B cell (primary cell): ENCODE measurements at regions of chr13 and their contacts with region 1.

Region 1: GRCh38 chr13:30739761-30740642 is 4.7 kb downstream of the ALOX5AP start:
- DNase-seq: peak; percentile 55
- ATAC-seq: peak; percentile 3
- H3K4me3 ChIP-seq: peak overlapping the region in 2 of 5 experiments; percentile 0 to 52
- H3K4me3 Mint-ChIP-seq: peak overlapping the region; percentile 84
- H3K27ac ChIP-seq: peak overlapping the region in 1 of 2 donors; percentile 45
- H3K27ac Mint-ChIP-seq: peak overlapping the region; percentile 78
- H3K4me1 ChIP-seq: peaks cover 69 to 82% of the 10 kb centered on the region in 2 donors
- H3K4me1 Mint-ChIP-seq: peaks cover 80% of the 10 kb centered on the region
- H3K27me3 ChIP-seq: no peaks in the 10 kb centered on the region
- H3K27me3 Mint-ChIP-seq: no peaks in the 10 kb centered on the region
- CTCF ChIP-seq: no peak

Region 2: DNA sequence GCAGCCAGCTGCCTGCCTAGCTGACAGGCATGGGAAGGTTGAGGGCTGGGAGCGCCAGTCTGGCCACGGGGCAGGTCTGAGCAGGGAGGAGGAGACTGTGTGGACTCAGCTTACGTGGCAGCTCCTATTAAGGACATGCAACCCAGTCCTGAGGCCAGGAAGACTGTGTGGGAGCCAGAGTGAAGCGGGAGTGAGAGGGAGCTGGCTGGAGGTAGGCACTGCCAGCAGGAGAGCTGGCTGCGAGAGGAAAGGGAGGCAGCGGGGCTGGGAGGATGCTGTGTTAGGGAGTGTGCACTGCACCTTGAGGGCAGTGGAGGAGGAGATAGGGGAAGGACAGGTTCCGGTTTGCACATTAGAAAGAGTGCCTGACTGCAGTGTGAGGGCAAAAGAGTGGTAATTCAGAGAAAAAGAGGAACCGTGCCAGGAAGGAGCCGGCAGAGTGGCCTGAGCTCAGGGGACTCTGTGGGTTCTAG is 1243.7 kb before region 1 on chr13:
- CTCF ChIA-PET with region 1: no interaction called
- POLR2A ChIA-PET with region 1: no interaction called
- intact Hi-C with region 1: loop called (anchors 10 kb)
- DNase-seq: peak; percentile 78
- ATAC-seq: peak; percentile 68
- H3K4me3 ChIP-seq: peak overlapping the region in 4 of 5 experiments; percentile 14 to 48 (median 26)
- H3K4me3 Mint-ChIP-seq: peak overlapping the region; percentile 86
- H3K27ac ChIP-seq: peak overlapping the region; percentile 46 to 47
- H3K27ac Mint-ChIP-seq: peak overlapping the region; percentile 80
- H3K4me1 ChIP-seq: peaks cover 36 to 39% of the 10 kb centered on the region in 2 donors
- H3K4me1 Mint-ChIP-seq: peaks cover 36% of the 10 kb centered on the region
- H3K27me3 ChIP-seq: no peaks in the 10 kb centered on the region
- H3K27me3 Mint-ChIP-seq: no peaks in the 10 kb centered on the region
- CTCF ChIP-seq: no peak

Region 3: DNA sequence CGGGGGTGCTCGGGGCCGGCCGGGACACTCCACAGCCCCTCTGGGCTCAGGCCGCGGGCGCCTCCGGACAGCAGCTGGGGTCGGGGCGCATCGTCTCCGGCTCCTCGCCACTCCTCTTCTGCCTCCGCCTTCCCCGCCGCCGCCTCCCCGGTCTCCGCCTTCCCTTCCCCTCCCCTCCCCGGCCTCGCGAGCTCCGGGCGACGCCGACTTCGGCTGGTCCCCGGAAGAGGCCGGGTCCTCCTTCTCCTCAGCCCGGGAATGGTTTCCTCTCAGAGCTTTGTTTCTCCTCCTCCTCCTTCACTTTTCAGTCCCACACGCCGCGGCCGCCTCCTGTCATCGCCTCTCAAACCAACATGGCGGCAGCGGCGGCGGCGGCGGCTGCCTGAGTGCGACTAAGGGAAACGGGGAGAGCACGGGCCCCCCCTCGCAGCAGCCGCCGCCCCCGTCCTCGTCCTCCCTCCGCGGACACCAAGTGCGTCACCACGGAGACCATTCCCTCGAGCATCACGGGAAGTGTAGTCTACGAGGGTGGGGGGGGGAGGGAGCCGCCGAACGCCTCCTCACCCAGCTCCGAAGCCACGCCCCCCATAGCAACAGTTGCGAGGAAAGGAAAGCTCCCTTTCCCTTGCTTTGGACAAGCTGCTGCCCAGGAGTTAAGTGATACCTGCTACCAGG is 889.6 kb before region 1 on chr13 and contains the start of gene UBL3:
- CTCF ChIA-PET with region 1: no interaction called
- POLR2A ChIA-PET with region 1: no interaction called
- intact Hi-C with region 1: loop called (anchors 10 kb)
- DNase-seq: peak; percentile 97
- ATAC-seq: peak; percentile 92
- H3K4me3 ChIP-seq: peak within 1 kb of the TSS; percentile 78 to 99 (median 87)
- H3K4me3 Mint-ChIP-seq: peak within 1 kb of the TSS; percentile 91
- H3K27ac ChIP-seq: peak within 1 kb of the TSS; percentile 93 to 94
- H3K27ac Mint-ChIP-seq: peak within 1 kb of the TSS; percentile 99
- H3K4me1 ChIP-seq: peaks cover 17 to 20% of the 10 kb centered on the region in 2 donors
- H3K4me1 Mint-ChIP-seq: peaks cover 28% of the 10 kb centered on the region
- H3K27me3 ChIP-seq: no peaks in the 10 kb centered on the region
- H3K27me3 Mint-ChIP-seq: no peaks in the 10 kb centered on the region
- CTCF ChIP-seq: no peak
- total RNA-seq, gene UBL3: 26.4 and 27.9 TPM in 2 replicates

Region 4: DNA sequence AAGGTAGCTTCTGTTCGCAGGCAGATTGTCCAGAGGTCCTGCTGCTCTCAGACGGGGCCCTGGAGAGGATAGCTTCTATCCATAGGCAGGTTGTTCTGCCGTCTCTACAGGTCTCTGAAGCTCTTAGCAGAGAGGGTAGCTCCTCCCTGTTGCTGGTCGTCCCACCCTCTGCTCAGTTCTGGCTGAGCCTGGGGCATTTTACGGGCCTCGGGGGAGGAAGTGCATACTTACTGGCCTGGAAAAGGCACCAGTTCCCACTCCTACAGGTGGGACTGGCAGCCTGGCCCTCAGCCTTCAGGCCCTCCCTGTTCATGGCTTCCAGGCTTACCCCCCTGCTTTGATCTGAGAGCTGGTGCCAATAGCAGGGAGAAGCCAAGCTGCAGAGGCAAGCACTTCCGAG is 80.0 kb before region 1 on chr13:
- CTCF ChIA-PET with region 1: interaction called, 4 read pairs
- POLR2A ChIA-PET with region 1: no interaction called
- intact Hi-C with region 1: loop called (anchors 1 kb)
- DNase-seq: no peak
- ATAC-seq: no peak
- H3K4me3 ChIP-seq: peak overlapping the region in 4 of 5 experiments; percentile 14 to 50 (median 34)
- H3K4me3 Mint-ChIP-seq: peak overlapping the region; percentile 83
- H3K27ac ChIP-seq: peak overlapping the region; percentile 78 to 83
- H3K27ac Mint-ChIP-seq: peak overlapping the region; percentile 97
- H3K4me1 ChIP-seq: peaks cover 56 to 60% of the 10 kb centered on the region in 2 donors
- H3K4me1 Mint-ChIP-seq: peaks cover 24% of the 10 kb centered on the region
- H3K27me3 ChIP-seq: no peaks in the 10 kb centered on the region
- H3K27me3 Mint-ChIP-seq: no peaks in the 10 kb centered on the region
- CTCF ChIP-seq: no peak

Region 5: GRCh38 chr13:30690282-30691188 is 49.5 kb before region 1 on chr13:
- CTCF ChIA-PET with region 1: no interaction called
- POLR2A ChIA-PET with region 1: no interaction called
- intact Hi-C with region 1: loop called (anchors 1 kb)
- DNase-seq: peak; percentile 63
- ATAC-seq: peak; percentile 90
- H3K4me3 ChIP-seq: peak overlapping the region in 4 of 5 experiments; percentile 20 to 55 (median 31)
- H3K4me3 Mint-ChIP-seq: peak overlapping the region; percentile 84
- H3K27ac ChIP-seq: peak overlapping the region in 1 of 2 donors; percentile 10
- H3K27ac Mint-ChIP-seq: peak overlapping the region; percentile 79
- H3K4me1 ChIP-seq: peaks cover 16 to 17% of the 10 kb centered on the region in 2 donors
- H3K4me1 Mint-ChIP-seq: peaks cover 20% of the 10 kb centered on the region
- H3K27me3 ChIP-seq: no peaks in the 10 kb centered on the region
- H3K27me3 Mint-ChIP-seq: peaks cover 3% of the 10 kb centered on the region
- CTCF ChIP-seq: no peak

Region 6: DNA sequence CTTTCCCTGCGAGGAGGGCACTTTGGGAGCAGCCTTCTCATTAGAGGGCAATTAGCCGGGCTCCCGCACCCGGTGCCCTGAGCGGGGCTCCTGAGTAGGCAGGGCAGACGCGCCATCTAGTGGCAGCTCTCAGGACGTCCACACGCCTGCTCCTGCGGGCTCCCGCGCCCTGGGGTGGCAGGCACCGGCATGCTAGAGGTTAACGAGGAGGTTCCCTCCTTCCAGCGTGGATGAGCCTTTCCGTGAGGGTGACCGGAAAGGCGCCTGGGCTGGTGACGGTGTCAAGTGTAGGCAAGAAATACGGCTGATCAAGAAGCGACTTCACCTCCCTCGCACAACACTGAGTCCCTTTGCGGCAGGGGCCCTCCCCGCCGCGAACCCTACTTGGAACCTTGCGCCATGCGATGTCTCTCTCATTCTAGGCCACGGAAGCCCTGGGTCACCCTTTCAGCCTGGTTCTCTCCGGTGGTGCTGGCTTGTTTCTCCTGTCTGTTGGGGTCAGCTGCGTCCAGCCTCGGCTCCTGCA is 63.0 kb after region 1 on chr13:
- CTCF ChIA-PET with region 1: interaction called, 5 read pairs
- POLR2A ChIA-PET with region 1: no interaction called
- intact Hi-C with region 1: loop called (anchors 5 kb)
- DNase-seq: peak; percentile 87
- ATAC-seq: peak; percentile 99
- H3K4me3 ChIP-seq: peak overlapping the region in 3 of 5 experiments; percentile 18 to 37 (median 21)
- H3K4me3 Mint-ChIP-seq: peak overlapping the region; percentile 80
- H3K27ac ChIP-seq: no peak overlapping the region
- H3K27ac Mint-ChIP-seq: no peak overlapping the region
- H3K4me1 ChIP-seq: peaks cover 8 to 9% of the 10 kb centered on the region in 2 donors
- H3K4me1 Mint-ChIP-seq: peaks cover 11% of the 10 kb centered on the region
- H3K27me3 ChIP-seq: peaks cover 0 to 8% (median 0%) of the 10 kb centered on the region in 4 experiments
- H3K27me3 Mint-ChIP-seq: no peaks in the 10 kb centered on the region
- CTCF ChIP-seq: peak; percentile 98